Heart right ventricle (tissue), 16 donors: ENCODE measurements at regions of chr6 and their contacts with region 1.

Region 1: DNA sequence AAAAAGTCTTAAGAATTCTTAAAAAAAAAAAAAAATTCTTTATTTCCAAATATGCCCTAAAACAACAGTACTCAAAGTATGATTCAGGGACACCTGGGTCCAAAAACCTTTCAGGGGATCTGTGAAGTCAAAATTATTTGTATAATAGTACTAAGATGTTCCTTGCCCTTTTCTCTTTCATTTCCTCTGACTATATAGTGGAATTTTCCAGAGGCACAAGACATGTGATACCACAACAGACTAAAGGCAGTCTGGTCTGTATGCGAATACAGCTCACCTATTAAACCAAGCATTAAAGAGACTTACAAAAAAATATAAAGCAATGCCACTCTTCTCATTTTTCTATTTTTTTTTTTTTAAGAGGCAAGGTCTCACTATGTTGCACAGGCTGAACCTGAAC is 15.4 kb downstream of the NOL7 start:
- DNase-seq: no peak
- ATAC-seq: no peak
- H3K4me3 ChIP-seq: no peak overlapping the region
- H3K27ac ChIP-seq: no peak overlapping the region
- H3K4me1 ChIP-seq: peaks cover 0 to 11% (median 0%) of the 10 kb centered on the region in 9 donors
- H3K27me3 ChIP-seq: no peaks in the 10 kb centered on the region
- CTCF ChIP-seq: no peak

Region 2: DNA sequence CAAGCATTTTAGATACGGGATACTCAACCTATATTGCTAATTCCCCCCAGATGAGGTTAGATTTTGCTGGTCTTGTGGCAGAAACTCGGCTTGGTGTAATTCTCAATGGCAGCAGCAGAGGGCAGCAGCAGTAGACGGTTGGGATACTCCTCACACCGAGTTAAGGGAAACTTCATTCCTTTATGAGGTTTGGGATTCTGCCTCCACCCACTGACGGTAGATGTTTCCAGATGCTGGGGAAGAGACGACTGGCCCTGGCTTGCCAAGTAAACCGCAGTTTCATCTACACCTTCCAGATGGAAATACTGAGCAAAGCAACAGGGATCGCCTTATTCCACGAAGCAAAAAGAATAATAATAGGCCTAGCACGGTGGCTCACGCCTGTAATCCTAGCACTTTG is 293.9 kb before region 1 on chr6:
- intact Hi-C with region 1: no loop called
- DNase-seq: peak; percentile 82 to 84
- ATAC-seq: peak; percentile 66 to 85 (median 72)
- H3K4me3 ChIP-seq: no peak overlapping the region
- H3K27ac ChIP-seq: peak overlapping the region in 1 of 10 donors; percentile 40
- H3K4me1 ChIP-seq: peaks cover 0 to 29% (median 8%) of the 10 kb centered on the region in 9 donors
- H3K27me3 ChIP-seq: no peaks in the 10 kb centered on the region
- CTCF ChIP-seq: peak; percentile 70 to 95 (median 90)

Region 3: GRCh38 chr6:13687917-13688351 is 57.4 kb after region 1 on chr6:
- intact Hi-C with region 1: loop called in 1 of 10 experiments (anchors 5 kb)
- DNase-seq: no peak
- ATAC-seq: no peak
- H3K4me3 ChIP-seq: no peak overlapping the region
- H3K27ac ChIP-seq: no peak overlapping the region
- H3K4me1 ChIP-seq: peaks cover 0 to 47% (median 31%) of the 10 kb centered on the region in 9 donors
- H3K27me3 ChIP-seq: no peaks in the 10 kb centered on the region
- CTCF ChIP-seq: no peak

Region 4: GRCh38 chr6:13908955-13909381 is 278.5 kb after region 1 on chr6:
- intact Hi-C with region 1: no loop called
- DNase-seq: peak in 1 of 2 donors; percentile 49
- ATAC-seq: peak in 5 of 8 donors; percentile 62 to 79 (median 66)
- H3K4me3 ChIP-seq: no peak overlapping the region
- H3K27ac ChIP-seq: no peak overlapping the region
- H3K4me1 ChIP-seq: peaks cover 0 to 5% (median 0%) of the 10 kb centered on the region in 9 donors
- H3K27me3 ChIP-seq: peaks cover 0 to 36% (median 20%) of the 10 kb centered on the region in 7 donors
- CTCF ChIP-seq: peak; percentile 70 to 87 (median 80)